ENCODE measurements at regions of chr16 and their contacts with region 1.

Region 1: GRCh38 chr16:22190776-22191531 is 15.1 kb upstream of the EEF2K start:
- DNase-seq: peak; percentile 100
- ATAC-seq: peak; percentile 68
- H3K4me3 Mint-ChIP-seq: peak overlapping the region; percentile 86
- H3K27ac Mint-ChIP-seq: peak overlapping the region; percentile 98
- H3K4me1 Mint-ChIP-seq: peaks cover 53% of the 10 kb centered on the region
- H3K27me3 Mint-ChIP-seq: no peaks in the 10 kb centered on the region

Region 2: GRCh38 chr16:21989133-21989532 is 201.8 kb before region 1 on chr16:
- CTCF ChIA-PET with region 1: interaction called, 12 read pairs
- DNase-seq: no peak
- ATAC-seq: no peak
- H3K4me3 Mint-ChIP-seq: no peak overlapping the region
- H3K27ac Mint-ChIP-seq: no peak overlapping the region
- H3K4me1 Mint-ChIP-seq: peaks cover 21% of the 10 kb centered on the region
- H3K27me3 Mint-ChIP-seq: no peaks in the 10 kb centered on the region

Region 3: GRCh38 chr16:22007509-22008214 is 183.3 kb before region 1 on chr16 and contains the start of gene MOSMO:
- CTCF ChIA-PET with region 1: interaction called, 102 read pairs
- DNase-seq: peak; percentile 73
- ATAC-seq: peak; percentile 96
- H3K4me3 Mint-ChIP-seq: peak within 1 kb of the TSS; percentile 85
- H3K27ac Mint-ChIP-seq: peak within 1 kb of the TSS; percentile 81
- H3K4me1 Mint-ChIP-seq: peaks cover 34% of the 10 kb centered on the region
- H3K27me3 Mint-ChIP-seq: no peaks in the 10 kb centered on the region
- total RNA-seq, gene MOSMO: 10.2 to 12.6 TPM

Region 4: GRCh38 chr16:22077700-22078313 is 113.1 kb before region 1 on chr16:
- CTCF ChIA-PET with region 1: interaction called, 32 read pairs
- DNase-seq: peak; percentile 79
- ATAC-seq: peak; percentile 58
- H3K4me3 Mint-ChIP-seq: no peak overlapping the region
- H3K27ac Mint-ChIP-seq: no peak overlapping the region
- H3K4me1 Mint-ChIP-seq: peaks cover 2% of the 10 kb centered on the region
- H3K27me3 Mint-ChIP-seq: no peaks in the 10 kb centered on the region

Region 5: GRCh38 chr16:22174642-22175041 is 16.3 kb before region 1 on chr16:
- CTCF ChIA-PET with region 1: interaction called, 11 read pairs
- DNase-seq: no peak
- ATAC-seq: no peak
- H3K4me3 Mint-ChIP-seq: no peak overlapping the region
- H3K27ac Mint-ChIP-seq: no peak overlapping the region
- H3K4me1 Mint-ChIP-seq: no peaks in the 10 kb centered on the region
- H3K27me3 Mint-ChIP-seq: no peaks in the 10 kb centered on the region

Region 6: GRCh38 chr16:22250522-22250921 is 59.6 kb after region 1 on chr16:
- CTCF ChIA-PET with region 1: no interaction called
- DNase-seq: no peak
- ATAC-seq: no peak
- H3K4me3 Mint-ChIP-seq: no peak overlapping the region
- H3K27ac Mint-ChIP-seq: no peak overlapping the region
- H3K4me1 Mint-ChIP-seq: peaks cover 18% of the 10 kb centered on the region
- H3K27me3 Mint-ChIP-seq: no peaks in the 10 kb centered on the region

Region 7: GRCh38 chr16:22297114-22297878 is 106.3 kb after region 1 on chr16 and contains the start of gene POLR3E:
- CTCF ChIA-PET with region 1: interaction called, 204 read pairs
- DNase-seq: peak; percentile 99
- ATAC-seq: peak; percentile 88
- H3K4me3 Mint-ChIP-seq: peak within 1 kb of the TSS; percentile 95
- H3K27ac Mint-ChIP-seq: peak within 1 kb of the TSS; percentile 96
- H3K4me1 Mint-ChIP-seq: peaks cover 31% of the 10 kb centered on the region
- H3K27me3 Mint-ChIP-seq: no peaks in the 10 kb centered on the region
- total RNA-seq, gene POLR3E: 56.5 to 88.0 TPM